Panc1 (cell line): ENCODE measurements at regions of chr1 and their contacts with region 1.

Region 1: GRCh38 chr1:180533266-180533987 is 25.3 kb upstream of the OVAAL start:
- DNase-seq: no peak
- ATAC-seq: peak; percentile 90
- H3K4me3 ChIP-seq: no peak overlapping the region
- H3K27ac ChIP-seq: no peak overlapping the region
- H3K4me1 ChIP-seq: no peaks in the 10 kb centered on the region; the same call in 1 of the 2 replicates
- H3K27me3 ChIP-seq: peaks cover 2% of the 10 kb centered on the region; the same call in 1 of the 2 replicates
- CTCF ChIP-seq: peak; percentile 93

Region 2: DNA sequence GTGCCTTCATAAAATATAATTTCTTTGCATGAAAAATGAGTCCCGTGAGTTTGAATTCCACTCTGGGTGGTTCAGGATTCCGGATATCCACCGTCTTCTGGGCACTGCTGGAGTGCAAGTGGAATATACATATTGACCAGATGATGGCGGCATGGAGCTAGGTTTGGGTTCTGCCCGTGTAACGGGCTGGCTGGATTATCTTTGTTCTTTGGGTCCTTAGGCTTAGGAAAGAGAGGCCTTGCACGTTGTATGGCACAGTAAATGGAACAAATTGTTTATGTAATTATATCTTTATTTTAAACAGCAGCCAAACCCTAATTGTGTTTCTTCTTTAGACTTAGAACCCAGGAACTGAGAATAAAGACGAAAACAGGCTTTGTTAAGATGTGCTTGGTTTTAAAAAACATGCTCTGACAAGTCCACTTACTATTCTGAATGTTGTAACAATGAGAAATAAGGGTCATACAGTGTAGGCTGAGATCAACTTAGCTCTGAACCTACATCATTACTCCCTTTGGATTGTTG is 17.5 kb before region 1 on chr1:
- CTCF ChIA-PET with region 1: no interaction called
- POLR2A ChIA-PET with region 1: no interaction called
- in situ Hi-C with region 1: no loop called
- intact Hi-C with region 1: no loop called
- DNase-seq: peak; percentile 50
- ATAC-seq: peak; percentile 98
- H3K4me3 ChIP-seq: no peak overlapping the region
- H3K27ac ChIP-seq: 0 out of 2 replicates have a peak overlapping the region, but pooled peaks have one; percentile 5
- H3K4me1 ChIP-seq: peaks cover 5% of the 10 kb centered on the region; the same call in 1 of the 2 replicates
- H3K27me3 ChIP-seq: no peaks in the 10 kb centered on the region
- CTCF ChIP-seq: peak; percentile 90

Region 3: GRCh38 chr1:180623579-180624347 is 90.3 kb after region 1 on chr1:
- CTCF ChIA-PET with region 1: no interaction called
- POLR2A ChIA-PET with region 1: interaction called, 4 read pairs
- in situ Hi-C with region 1: no loop called
- intact Hi-C with region 1: loop called (anchors 5 kb)
- DNase-seq: no peak
- ATAC-seq: peak; percentile 60; the same call in 1 of the 2 replicates
- H3K4me3 ChIP-seq: no peak overlapping the region
- H3K27ac ChIP-seq: no peak overlapping the region
- H3K4me1 ChIP-seq: no peaks in the 10 kb centered on the region
- H3K27me3 ChIP-seq: peaks cover 2% of the 10 kb centered on the region; the same call in 1 of the 2 replicates
- CTCF ChIP-seq: peak; percentile 56

Region 4: DNA sequence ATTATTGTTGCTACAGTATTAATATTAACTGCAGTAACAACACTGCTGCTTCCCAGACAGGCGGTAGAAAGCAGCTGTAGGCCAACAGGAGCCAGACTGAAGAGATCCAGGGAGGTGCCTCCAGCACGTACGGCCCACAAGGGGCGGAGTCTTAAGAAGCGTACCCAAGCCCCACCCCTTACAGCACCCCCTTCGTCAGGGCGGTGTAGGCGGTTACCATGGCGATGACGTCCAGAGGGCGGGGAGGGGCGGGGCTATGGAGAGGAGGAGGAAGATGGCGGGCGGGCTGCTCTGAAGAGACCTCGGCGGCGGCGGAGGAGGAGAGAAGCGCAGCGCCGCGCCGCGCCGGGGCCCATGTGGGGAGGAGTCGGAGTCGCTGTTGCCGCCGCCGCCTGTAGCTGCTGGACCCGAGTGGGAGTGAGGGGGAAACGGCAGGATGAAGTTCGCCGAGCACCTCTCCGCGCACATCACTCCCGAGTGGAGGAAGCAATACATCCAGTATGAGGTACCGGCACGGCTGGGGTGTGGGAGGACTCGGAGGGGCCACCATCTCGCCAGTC is 98.4 kb after region 1 on chr1 and contains the start of gene XPR1:
- CTCF ChIA-PET with region 1: no interaction called
- POLR2A ChIA-PET with region 1: no interaction called
- in situ Hi-C with region 1: no loop called
- intact Hi-C with region 1: loop called (anchors 5 kb)
- DNase-seq: peak; percentile 92
- ATAC-seq: peak; percentile 99
- H3K4me3 ChIP-seq: peak within 1 kb of the TSS; percentile 87 to 93
- H3K27ac ChIP-seq: peak within 1 kb of the TSS; percentile 91
- H3K4me1 ChIP-seq: peaks cover 21% of the 10 kb centered on the region
- H3K27me3 ChIP-seq: no peaks in the 10 kb centered on the region
- CTCF ChIP-seq: peak; percentile 1; the same call in 1 of the 2 replicates
- total RNA-seq, gene XPR1: 36.1 TPM

Region 5: DNA sequence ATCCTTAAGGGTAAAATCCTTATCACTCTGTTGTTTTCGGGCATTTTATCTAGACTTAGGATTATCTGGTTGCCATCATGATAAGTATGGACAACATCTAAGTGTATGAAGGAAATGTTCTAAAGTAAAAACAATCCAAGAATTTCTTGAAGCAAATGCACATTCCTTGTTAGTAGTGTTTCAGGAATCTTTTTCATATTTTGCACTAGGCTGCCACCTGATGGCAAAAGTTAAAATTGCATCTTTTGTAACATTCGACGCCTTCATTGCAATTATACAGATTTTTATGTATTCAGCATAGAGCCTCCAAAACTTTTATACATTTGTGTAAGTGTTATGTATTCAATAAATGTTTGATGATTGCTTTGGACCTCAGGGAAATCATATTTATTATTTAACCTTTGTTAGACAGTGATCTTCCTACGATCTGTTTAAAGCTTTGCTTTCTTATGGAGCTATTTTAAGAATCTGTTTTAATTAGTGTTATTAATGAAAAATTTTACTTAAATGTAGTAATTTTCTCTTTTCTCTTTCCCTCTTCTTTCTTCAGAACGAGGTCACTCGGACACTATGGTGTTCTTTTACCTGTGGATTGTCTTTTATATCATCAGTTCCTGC is 329.8 kb after region 1 on chr1:
- CTCF ChIA-PET with region 1: interaction called, 4 read pairs
- POLR2A ChIA-PET with region 1: interaction called, 4 read pairs
- in situ Hi-C with region 1: no loop called
- intact Hi-C with region 1: loop called (anchors 5 kb)
- DNase-seq: peak; percentile 47
- ATAC-seq: no peak
- H3K4me3 ChIP-seq: no peak overlapping the region
- H3K27ac ChIP-seq: no peak overlapping the region
- H3K4me1 ChIP-seq: no peaks in the 10 kb centered on the region
- H3K27me3 ChIP-seq: no peaks in the 10 kb centered on the region
- CTCF ChIP-seq: peak; percentile 68; the same call in 1 of the 2 replicates